Common myeloid progenitor, CD34-positive (primary cell): ENCODE measurements at regions of chr16 and their contacts with region 1.

Region 1: DNA sequence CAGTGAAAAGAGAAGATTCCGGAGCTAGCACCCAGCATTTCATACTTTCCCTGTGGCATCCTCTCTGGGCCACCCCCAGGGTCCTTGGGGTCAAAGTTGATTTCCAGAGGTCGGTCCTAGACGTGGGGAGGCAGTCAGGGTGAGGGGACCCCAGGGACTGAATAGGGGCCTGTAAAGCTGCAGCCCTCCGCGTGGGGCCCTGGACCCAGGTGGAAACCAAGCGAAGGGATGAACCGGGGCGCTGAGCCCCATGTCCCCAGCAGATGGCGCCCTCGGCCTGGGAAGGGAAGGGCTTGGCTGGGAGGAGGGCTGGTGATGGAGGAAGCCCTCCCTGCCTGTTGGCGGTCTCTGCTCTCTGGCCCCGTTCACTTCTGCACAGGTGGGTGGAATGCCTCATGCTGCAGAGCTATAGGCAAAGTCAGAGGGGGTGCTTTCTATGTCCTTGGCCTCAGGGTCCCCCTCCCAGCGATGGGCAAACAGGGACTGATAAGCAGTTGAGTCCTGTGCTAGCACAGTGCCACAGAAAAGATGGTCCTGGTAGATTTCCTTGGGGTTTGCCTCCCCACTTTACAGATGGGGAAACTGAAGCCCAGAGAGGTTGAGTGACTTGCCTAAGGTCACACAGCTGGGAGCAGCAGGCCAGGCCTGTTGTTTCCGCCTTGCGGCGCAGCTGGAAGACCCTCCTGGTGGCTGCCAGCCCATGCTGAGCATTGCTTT is 163.4 kb upstream of the CIBAR2 start:
- DNase-seq: peak; percentile 64 to 78 (median 78)
- H3K4me3 ChIP-seq: no peak overlapping the region
- H3K27ac ChIP-seq: no peak overlapping the region
- H3K4me1 ChIP-seq: no peaks in the 10 kb centered on the region
- H3K27me3 ChIP-seq: no peaks in the 10 kb centered on the region

Region 2: GRCh38 chr16:85194307-85195270 is 81.1 kb before region 1 on chr16:
- CTCF ChIA-PET with region 1: no interaction called
- POLR2A ChIA-PET with region 1: no interaction called
- DNase-seq: no peak
- H3K4me3 ChIP-seq: no peak overlapping the region
- H3K27ac ChIP-seq: no peak overlapping the region
- H3K4me1 ChIP-seq: no peaks in the 10 kb centered on the region
- H3K27me3 ChIP-seq: no peaks in the 10 kb centered on the region

Region 3: GRCh38 chr16:85253084-85253941 is 22.4 kb before region 1 on chr16:
- CTCF ChIA-PET with region 1: interaction called, 25 read pairs
- POLR2A ChIA-PET with region 1: interaction called, 3 read pairs
- DNase-seq: peak; percentile 57 to 86 (median 79)
- H3K4me3 ChIP-seq: no peak overlapping the region
- H3K27ac ChIP-seq: no peak overlapping the region
- H3K4me1 ChIP-seq: peaks cover 0 to 22% (median 15%) of the 10 kb centered on the region in 4 experiments
- H3K27me3 ChIP-seq: no peaks in the 10 kb centered on the region

Region 4: GRCh38 chr16:85258629-85259028 is 17.1 kb before region 1 on chr16:
- CTCF ChIA-PET with region 1: interaction called, 44 read pairs
- POLR2A ChIA-PET with region 1: interaction called, 3 read pairs
- DNase-seq: peak in 2 of 3 donors; percentile 75 to 89
- H3K4me3 ChIP-seq: peak overlapping the region in 3 of 7 experiments; percentile 9 to 46 (median 33)
- H3K27ac ChIP-seq: no peak overlapping the region
- H3K4me1 ChIP-seq: peaks cover 0 to 52% (median 34%) of the 10 kb centered on the region in 4 experiments
- H3K27me3 ChIP-seq: no peaks in the 10 kb centered on the region

Region 5: GRCh38 chr16:85286970-85287824 is 11.5 kb after region 1 on chr16:
- CTCF ChIA-PET with region 1: interaction called, 22 read pairs
- POLR2A ChIA-PET with region 1: no interaction called
- DNase-seq: no peak
- H3K4me3 ChIP-seq: no peak overlapping the region
- H3K27ac ChIP-seq: no peak overlapping the region
- H3K4me1 ChIP-seq: peaks cover 0 to 22% (median 16%) of the 10 kb centered on the region in 4 experiments
- H3K27me3 ChIP-seq: no peaks in the 10 kb centered on the region

Region 6: GRCh38 chr16:85296859-85297660 is 21.4 kb after region 1 on chr16:
- CTCF ChIA-PET with region 1: interaction called, 14 read pairs
- POLR2A ChIA-PET with region 1: no interaction called
- DNase-seq: peak; percentile 78 to 86 (median 85)
- H3K4me3 ChIP-seq: no peak overlapping the region
- H3K27ac ChIP-seq: no peak overlapping the region
- H3K4me1 ChIP-seq: peaks cover 0 to 2% (median 0%) of the 10 kb centered on the region in 4 experiments
- H3K27me3 ChIP-seq: no peaks in the 10 kb centered on the region

Region 7: DNA sequence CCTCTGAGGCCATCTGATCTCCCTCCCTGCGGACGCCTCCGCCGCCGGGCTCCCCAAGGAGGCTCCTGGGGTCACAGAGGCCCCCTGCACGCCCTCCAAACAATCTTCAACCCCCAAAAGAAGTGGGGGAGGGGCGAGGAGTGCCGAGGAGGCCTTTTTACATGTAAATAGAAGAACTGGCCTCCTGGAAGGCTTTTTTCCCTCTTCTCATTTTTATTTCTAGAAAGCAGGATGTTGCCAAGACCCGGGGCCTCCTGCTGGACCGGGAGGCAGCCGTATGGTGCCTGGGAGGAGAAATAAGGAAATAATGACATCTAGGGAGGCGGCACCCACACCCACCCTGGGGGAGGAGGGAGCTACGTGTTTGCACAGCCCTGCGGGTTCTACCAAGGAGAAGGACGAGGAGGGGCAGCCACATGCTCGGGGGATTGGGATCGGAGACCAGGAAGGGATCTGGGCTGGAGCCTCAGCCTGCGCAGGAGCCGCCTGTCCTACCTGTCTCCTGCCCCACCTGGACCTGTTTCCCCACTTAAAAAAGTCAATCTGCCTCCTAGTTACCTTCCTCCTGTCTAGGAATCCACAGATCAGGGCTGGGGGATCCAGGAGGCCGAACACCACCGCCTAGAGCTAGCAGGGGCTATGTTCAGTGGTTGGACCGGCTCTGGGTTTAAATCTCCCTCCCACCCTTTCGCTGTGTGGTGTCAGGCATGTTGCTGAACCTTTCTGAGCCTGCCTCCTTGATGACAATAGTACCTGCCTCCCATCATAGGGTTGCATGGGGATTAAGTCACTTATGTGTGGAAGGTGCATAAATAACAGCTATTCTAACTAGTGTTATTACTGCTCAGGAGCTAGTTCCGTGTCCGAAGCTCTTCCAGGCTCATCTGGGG is 161.7 kb after region 1 on chr16:
- CTCF ChIA-PET with region 1: no interaction called
- POLR2A ChIA-PET with region 1: no interaction called
- DNase-seq: peak in 2 of 3 donors; percentile 31 to 34
- H3K4me3 ChIP-seq: peak overlapping the region in 2 of 7 experiments; percentile 19 to 38
- H3K27ac ChIP-seq: peak overlapping the region in 1 of 2 experiments; percentile 40
- H3K4me1 ChIP-seq: peaks cover 3 to 23% (median 16%) of the 10 kb centered on the region in 4 experiments
- H3K27me3 ChIP-seq: no peaks in the 10 kb centered on the region